ENCODE measurements at regions of chr1 and their contacts with region 1.

Region 1: DNA sequence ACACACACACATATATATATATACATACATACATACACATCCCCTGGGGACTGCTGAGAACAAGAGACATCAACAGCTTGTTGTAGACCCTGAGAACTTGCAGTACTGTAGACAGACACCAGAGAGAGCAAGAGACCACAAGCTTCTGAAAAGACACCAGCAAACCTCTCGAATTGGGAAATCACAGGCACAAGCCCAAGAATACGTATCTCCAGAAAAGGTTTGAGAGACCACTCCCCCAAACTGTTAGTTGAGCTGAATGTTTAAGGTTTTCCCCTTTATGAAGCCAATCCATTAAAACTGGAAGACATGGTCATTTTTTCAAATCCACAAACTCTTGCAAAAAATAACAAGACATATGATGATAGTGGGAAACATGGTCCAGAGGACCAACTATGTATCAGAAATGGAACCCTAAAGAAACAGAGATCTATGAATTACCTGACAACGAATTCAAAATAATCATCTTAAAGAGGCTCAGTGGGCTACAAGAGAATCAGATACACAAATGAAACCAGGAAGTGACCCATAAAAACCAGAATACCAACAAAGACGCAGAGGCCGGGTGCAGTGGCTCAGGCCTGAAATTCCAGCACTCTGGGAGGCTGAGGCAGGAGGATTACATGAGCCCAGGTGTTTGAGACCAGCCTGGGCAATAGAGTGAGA is 45.1 kb downstream of the SLC2A1 start:
- DNase-seq: no peak
- ATAC-seq: peak; percentile 80 to 89
- H3K4me3 ChIP-seq: no peak overlapping the region
- H3K27ac ChIP-seq: no peak overlapping the region
- H3K4me1 ChIP-seq: no peaks in the 10 kb centered on the region
- H3K27me3 ChIP-seq: no peaks in the 10 kb centered on the region
- CTCF ChIP-seq: peak; percentile 76

Region 2: GRCh38 chr1:42700006-42700405 is 213.6 kb before region 1 on chr1:
- intact Hi-C with region 1: no loop called
- DNase-seq: no peak
- ATAC-seq: no peak
- H3K4me3 ChIP-seq: no peak overlapping the region
- H3K27ac ChIP-seq: no peak overlapping the region
- H3K4me1 ChIP-seq: no peaks in the 10 kb centered on the region
- H3K27me3 ChIP-seq: no peaks in the 10 kb centered on the region
- CTCF ChIP-seq: no peak

Region 3: DNA sequence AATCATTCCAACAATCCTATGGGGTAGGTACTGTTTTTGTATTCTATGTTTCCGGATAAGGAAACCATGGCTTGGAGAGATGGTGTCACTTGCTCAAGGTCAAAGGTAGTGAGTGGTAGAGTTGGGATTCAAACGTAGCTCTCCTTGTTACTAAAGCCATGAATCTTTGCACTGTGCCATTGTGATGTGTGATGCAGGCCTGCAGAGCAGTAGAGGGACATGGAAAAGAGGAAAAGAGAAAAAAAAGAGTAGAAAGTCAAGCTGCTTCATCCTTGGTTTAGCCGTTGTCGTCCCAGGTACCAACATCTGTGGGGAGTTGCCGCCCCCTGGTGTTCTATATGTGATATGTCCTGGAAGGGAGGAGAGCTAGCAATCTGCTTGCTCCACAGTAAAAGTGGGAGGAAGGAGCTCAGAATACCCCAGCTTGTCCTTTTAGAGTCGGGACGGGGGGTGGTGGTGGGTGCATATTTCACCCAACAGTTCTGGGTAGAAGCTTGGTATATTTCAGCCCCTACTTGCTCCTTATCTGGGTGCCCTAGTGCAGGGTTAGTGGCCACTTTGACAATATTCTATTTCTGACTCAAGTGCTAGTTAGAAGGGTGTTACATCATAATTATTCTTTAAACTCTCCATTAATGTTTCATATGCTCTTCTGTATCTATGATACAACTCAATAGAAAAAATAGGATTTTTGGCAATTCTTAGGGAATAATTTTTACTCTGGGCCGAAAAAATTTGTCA is 160.1 kb after region 1 on chr1:
- intact Hi-C with region 1: loop called (anchors 5 kb)
- DNase-seq: peak; percentile 73
- ATAC-seq: peak; percentile 89 to 93
- H3K4me3 ChIP-seq: no peak overlapping the region
- H3K27ac ChIP-seq: no peak overlapping the region
- H3K4me1 ChIP-seq: no peaks in the 10 kb centered on the region
- H3K27me3 ChIP-seq: no peaks in the 10 kb centered on the region
- CTCF ChIP-seq: peak; percentile 85